AG04449 (cell line): ENCODE measurements at regions of chrX and their contacts with region 1.

Region 1: DNA sequence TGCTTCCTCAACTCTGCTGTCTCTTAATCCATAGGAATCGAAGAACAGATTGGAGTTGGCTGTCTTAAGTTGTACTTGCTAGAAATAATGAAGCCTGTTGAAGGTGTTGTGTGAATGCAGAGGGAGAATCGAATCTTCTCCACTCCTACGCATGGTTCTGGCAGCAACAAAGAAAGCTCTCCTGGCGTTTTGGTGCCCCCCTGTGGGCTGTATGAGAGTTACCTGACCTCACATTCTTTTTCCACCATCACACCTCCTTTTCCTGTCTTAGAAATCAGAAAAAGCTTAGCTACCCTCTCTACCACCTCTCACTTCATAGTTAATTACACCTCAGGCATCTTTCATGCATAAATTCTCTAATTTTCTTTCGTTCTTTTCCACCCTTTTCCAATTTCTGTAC is 16.3 kb downstream of the KLF8 start:
- DNase-seq: no peak
- H3K4me3 ChIP-seq: no peak overlapping the region
- CTCF ChIP-seq: peak; percentile 46

Region 2: GRCh38 chrX:55135171-55135570 is 1113.3 kb before region 1 on chrX:
- CTCF ChIA-PET with region 1: interaction called, 20 read pairs
- POLR2A ChIA-PET with region 1: no interaction called
- DNase-seq: no peak
- H3K4me3 ChIP-seq: no peak overlapping the region
- CTCF ChIP-seq: peak; percentile 35